GM10248 (cell line): ENCODE measurements at regions of chr7 and their contacts with region 1.

Region 1: GRCh38 chr7:73606801-73607691 is 17.3 kb downstream of the MLXIPL start:
- DNase-seq: peak; percentile 90
- CTCF ChIP-seq: peak; percentile 92

Region 2: DNA sequence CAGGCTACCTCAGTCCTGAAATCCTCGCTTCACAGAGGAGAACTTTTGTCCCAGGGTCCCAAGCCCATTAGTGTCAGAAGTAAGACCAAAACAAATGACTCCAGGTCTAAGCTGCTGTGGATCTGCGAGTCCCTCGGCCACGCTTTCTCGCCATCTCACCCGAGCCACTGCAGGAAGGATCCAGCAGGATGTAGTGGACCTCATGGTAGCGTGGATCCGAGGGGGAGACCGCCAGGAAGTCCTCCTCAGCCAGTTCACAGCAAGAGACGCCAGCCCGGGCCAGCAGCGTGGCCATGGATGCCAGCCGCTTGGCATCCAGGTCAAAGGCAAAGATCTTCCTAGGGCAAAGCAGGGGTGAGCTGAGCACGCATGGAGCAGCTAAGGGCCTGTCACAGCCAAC is 303.0 kb before region 1 on chr7:
- CTCF ChIA-PET with region 1: no interaction called
- POLR2A ChIA-PET with region 1: no interaction called
- DNase-seq: no peak
- CTCF ChIP-seq: no peak

Region 3: GRCh38 chr7:73477376-73477775 is 129.7 kb before region 1 on chr7:
- CTCF ChIA-PET with region 1: no interaction called
- POLR2A ChIA-PET with region 1: no interaction called
- DNase-seq: no peak
- CTCF ChIP-seq: no peak

Region 4: DNA sequence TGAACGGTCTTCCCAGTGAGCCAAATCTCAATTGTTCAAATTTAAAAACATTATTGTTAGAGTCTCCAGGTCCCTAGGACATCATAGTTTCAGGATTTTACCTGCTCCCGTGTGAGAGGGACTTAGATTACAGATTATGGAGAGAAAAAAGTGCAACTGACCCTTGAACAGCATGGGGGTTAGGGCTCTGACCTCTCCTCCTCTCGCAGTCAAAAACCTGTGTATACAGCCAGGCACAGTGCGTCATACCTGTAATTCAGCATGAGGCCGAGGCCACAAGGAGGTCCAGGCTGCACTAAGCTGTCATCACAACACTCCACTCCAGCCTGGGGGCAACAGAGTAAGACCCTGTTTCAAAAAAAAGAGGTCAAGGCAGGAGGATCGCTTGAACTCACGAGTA is 110.4 kb before region 1 on chr7:
- CTCF ChIA-PET with region 1: no interaction called
- POLR2A ChIA-PET with region 1: no interaction called
- DNase-seq: no peak
- CTCF ChIP-seq: no peak

Region 5: DNA sequence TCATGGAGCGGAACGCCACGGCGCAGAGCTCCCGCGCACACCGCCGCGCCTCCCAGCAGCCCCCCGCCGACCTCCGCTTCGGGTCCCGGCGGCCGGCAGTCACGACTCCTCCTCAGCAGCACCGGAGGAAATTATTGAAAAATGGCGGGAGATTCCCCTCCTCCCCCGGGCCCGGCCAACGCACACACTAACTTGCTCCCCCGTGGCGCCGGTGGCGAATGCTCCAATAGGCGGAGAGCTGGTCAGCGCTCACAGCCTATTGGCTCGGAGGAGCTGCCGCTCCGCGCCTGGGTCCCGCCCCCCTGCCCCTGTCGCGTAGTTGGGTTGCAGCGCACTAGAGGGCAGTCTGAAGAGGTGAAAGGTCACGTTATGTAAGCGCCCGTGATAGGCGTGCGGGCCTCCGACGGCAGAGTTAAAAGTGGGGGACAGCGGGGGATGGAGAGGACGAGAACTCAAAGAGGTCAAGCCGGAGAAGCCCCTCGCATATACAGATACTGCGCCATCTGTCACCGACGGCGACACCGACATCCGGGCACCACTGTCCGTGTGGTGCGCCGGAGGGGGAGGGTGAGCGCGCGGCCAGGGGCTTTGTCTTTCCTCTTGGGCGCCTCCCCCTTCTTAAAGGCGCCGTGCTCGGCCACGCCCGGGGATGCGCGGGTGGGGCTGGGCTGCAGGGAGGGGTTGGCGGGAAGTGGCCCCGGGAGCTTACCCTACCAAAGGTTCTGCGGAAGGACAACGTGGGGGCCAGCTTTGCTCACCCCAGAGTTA is 84.8 kb before region 1 on chr7 and contains the start of gene BAZ1B:
- CTCF ChIA-PET with region 1: no interaction called
- POLR2A ChIA-PET with region 1: no interaction called
- DNase-seq: peak; percentile 98
- CTCF ChIP-seq: no peak

Region 6: GRCh38 chr7:73578342-73579127 is 28.5 kb before region 1 on chr7 and contains the start of gene TBL2:
- CTCF ChIA-PET with region 1: interaction called, 55 read pairs
- POLR2A ChIA-PET with region 1: no interaction called
- DNase-seq: peak; percentile 99
- CTCF ChIP-seq: peak; percentile 20

Region 7: GRCh38 chr7:73621168-73622063 is 14.4 kb after region 1 on chr7:
- CTCF ChIA-PET with region 1: interaction called, 44 read pairs
- POLR2A ChIA-PET with region 1: no interaction called
- DNase-seq: no peak
- CTCF ChIP-seq: no peak

Region 8: DNA sequence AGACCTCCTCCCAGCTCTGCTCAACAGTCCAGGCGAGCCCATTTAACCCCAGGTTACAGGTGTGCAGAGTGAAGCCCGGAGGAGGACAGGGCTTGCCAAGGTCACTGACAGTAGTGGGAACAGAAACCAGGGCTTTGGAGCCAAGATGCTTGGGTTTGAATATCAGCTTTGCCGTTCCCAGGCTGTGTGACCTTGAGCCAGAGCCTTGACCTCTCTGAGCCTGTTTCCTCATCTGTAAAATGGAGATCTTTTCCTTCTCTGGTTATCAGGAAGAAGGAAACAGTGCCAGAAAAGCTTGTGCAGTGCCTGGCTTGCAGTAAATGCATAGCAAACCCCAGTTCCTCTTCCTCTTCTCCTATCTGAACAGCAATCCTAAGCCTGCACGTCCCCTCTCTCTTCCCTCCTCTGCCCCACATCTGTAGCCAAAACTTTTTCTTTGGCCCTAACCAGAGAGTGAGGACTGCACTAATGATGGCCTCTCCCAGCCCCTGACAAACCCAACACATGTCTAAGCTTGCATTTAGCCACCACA is 38.7 kb after region 1 on chr7:
- CTCF ChIA-PET with region 1: interaction called, 11 read pairs
- POLR2A ChIA-PET with region 1: no interaction called
- DNase-seq: no peak
- CTCF ChIP-seq: no peak

Region 9: GRCh38 chr7:73701357-73701995 is 94.4 kb after region 1 on chr7:
- CTCF ChIA-PET with region 1: interaction called, 14 read pairs
- POLR2A ChIA-PET with region 1: interaction called, 4 read pairs
- DNase-seq: peak; percentile 63
- CTCF ChIP-seq: peak; percentile 48

Region 10: GRCh38 chr7:73738612-73739374 is 131.7 kb after region 1 on chr7 and contains the start of gene ABHD11:
- CTCF ChIA-PET with region 1: interaction called, 170 read pairs
- POLR2A ChIA-PET with region 1: no interaction called
- DNase-seq: peak; percentile 100
- CTCF ChIP-seq: no peak